Lower leg skin (tissue), 4 donors: ENCODE measurements at regions of chr15 and their contacts with region 1.

Region 1: DNA sequence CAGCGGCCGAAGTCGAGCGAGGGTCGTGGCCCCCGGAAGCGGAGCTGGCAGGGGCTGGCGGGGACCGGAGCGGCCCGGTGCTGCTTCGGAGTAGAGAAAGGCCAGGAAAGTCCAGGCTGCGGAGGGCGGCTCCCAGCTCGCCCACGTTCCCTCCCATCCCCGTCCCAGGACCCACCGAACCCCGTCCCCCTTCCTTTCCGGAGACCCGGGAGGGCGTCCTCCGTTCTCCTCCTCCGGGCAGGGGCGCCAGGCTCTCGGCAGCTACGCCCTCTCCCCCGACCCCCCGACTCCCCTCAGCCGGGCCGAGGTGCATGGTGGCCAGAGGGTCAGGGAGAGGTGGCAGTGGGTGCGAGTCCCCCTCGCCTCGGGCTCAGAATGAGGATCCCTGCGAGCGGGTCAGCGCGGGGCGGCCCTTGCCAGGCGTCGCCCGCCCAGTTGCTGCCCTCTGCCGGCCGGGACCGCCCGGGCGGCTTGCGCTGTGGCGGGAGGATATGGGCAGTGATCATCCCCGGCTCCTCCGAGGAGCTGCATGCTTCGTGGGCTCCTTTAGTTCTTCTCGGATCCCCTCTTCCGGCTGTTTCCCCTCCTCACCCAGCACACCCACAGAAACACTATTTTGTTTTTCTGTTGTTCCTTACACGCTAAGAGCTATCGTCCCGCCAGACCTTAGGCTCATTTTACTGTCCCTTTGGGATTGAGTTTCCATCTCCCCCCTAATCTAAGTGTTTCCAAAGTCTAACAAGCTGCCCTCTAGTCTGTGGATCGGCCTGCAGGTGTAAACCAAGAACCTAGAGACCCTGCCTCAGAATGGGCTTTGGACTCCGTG is 744 bp upstream of the ALDH1A2 start:
- DNase-seq: peak in 1 of 2 donors; percentile 87
- H3K4me3 ChIP-seq: peak overlapping the region; percentile 37
- CTCF ChIP-seq: no peak
- POLR2A ChIP-seq: no peak

Region 2: DNA sequence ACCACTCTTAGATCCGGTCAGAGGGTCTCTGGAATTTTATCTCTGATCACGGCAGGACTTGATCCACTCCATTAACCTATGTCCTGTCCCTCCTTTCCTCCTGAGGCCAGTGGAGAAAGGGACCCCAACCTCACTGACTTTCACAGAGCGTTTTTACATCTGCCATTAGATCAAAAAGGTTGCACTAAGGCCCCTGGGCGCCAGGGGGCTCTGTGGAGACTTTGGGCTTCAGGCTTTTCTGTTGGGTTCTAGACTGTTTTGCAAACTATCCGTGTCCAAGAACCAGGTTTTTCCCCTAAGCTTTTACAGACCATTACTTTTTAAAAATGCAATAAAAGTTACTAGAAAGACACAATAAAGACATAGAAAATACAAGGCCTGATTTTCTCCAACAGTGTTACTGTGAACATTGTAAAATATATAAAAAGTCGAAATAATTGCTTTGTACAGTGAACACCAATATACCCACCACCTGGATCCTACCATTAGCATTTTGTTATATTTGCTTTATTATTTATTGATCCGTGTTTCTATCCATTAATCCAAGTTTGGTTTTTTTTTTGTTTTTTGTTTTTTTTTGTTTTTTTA is 200.0 kb before region 1 on chr15:
- intact Hi-C with region 1: loop called (anchors 5 kb)
- DNase-seq: no peak
- H3K4me3 ChIP-seq: no peak overlapping the region
- CTCF ChIP-seq: no peak
- POLR2A ChIP-seq: no peak